ENCODE measurements at regions of chr11 and their contacts with region 1.

Region 1: GRCh38 chr11:279966-280582 is 1.9 kb downstream of the NLRP6 start:
- DNase-seq: peak; percentile 30
- ATAC-seq: peak; percentile 78
- H3K4me3 ChIP-seq: no peak overlapping the region
- H3K27ac ChIP-seq: no peak overlapping the region
- H3K4me1 ChIP-seq: no peaks in the 10 kb centered on the region
- H3K27me3 ChIP-seq: peaks cover 71% of the 10 kb centered on the region
- CTCF ChIP-seq: no peak
- POLR2A ChIP-seq: no peak
- RAD21 ChIP-seq: no peak

Region 2: GRCh38 chr11:241634-242033 is 38.4 kb before region 1 on chr11:
- CTCF ChIA-PET with region 1: no interaction called
- POLR2A ChIA-PET with region 1: no interaction called
- dilution Hi-C with region 1: no loop called
- in situ Hi-C with region 1: loop called (anchors 5 kb)
- intact Hi-C with region 1: no loop called
- DNase-seq: no peak
- ATAC-seq: no peak
- H3K4me3 ChIP-seq: no peak overlapping the region
- H3K27ac ChIP-seq: no peak overlapping the region
- H3K4me1 ChIP-seq: no peaks in the 10 kb centered on the region; the same call in 1 of the 2 replicates
- H3K27me3 ChIP-seq: no peaks in the 10 kb centered on the region
- CTCF ChIP-seq: no peak
- POLR2A ChIP-seq: no peak
- RAD21 ChIP-seq: no peak